CD8-positive, alpha-beta T cell (primary cell): ENCODE measurements at regions of chr4 and their contacts with region 1.

Region 1: DNA sequence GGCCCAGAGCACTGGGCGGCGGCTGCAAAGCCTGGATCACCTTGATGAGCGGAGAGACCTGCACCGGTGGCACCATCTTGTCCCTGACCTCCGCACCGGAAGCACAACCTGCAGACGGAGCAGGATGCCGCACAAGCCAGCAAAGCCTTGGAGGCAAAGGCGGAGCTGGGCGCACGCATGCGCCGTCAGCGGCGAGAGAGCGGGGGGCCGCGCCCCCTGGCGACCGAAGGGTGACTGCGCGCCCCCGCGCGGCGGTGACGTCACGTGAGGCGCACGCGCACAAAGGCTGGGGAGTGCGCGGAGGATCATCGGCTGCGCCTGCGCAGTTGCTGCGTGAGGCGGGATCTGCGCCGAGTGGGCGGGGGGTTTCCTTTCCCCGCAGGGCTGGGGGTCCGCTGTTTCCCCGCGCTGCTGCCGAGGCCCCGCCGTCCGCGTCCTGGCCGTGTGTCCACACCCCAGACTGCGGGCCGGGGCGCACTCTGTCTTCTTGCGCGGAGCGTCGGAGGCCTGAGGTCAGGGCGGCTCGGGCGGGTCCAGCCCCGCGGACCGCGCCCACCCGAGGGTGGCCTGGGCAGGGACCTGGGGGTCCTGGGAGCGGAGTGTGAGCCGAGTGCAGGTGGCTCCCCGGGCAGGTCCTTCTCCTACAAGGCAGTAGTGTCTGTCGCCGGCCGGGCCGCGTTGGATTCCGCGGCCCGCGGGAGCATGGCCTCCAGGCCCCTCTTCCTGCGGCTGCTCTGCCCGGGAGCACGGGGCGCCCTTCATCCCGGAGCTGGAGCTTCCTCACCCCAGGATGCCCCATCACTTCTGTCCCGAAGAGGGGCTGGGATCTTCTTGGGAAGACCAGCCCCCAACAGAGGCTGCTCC is at the starts of genes ATP5ME and MYL5:
- DNase-seq: peak; percentile 95 to 99 (median 98)
- ATAC-seq: peak; percentile 91
- H3K4me3 ChIP-seq: peak within 1 kb of the TSS; percentile 79 to 92
- H3K4me3 Mint-ChIP-seq: peak within 1 kb of the TSS; percentile 91
- H3K27ac ChIP-seq: peak within 1 kb of the TSS; percentile 93 to 94
- H3K27ac Mint-ChIP-seq: peak within 1 kb of the TSS; percentile 88
- H3K4me1 ChIP-seq: peaks cover 21% of the 10 kb centered on the region
- H3K4me1 Mint-ChIP-seq: peaks cover 7% of the 10 kb centered on the region
- H3K27me3 ChIP-seq: no peaks in the 10 kb centered on the region
- H3K27me3 Mint-ChIP-seq: no peaks in the 10 kb centered on the region
- CTCF ChIP-seq: peak; percentile 87
- total RNA-seq, gene ATP5ME: 113 to 114 TPM
- total RNA-seq, gene MYL5: 27.2 to 28.7 TPM

Region 2: GRCh38 chr4:242121-242848 is 432.1 kb before region 1 on chr4:
- CTCF ChIA-PET with region 1: no interaction called
- POLR2A ChIA-PET with region 1: no interaction called
- intact Hi-C with region 1: loop called (anchors 2 to 5 kb)
- DNase-seq: peak; percentile 25 to 88 (median 64)
- ATAC-seq: peak; percentile 97
- H3K4me3 ChIP-seq: peak overlapping the region; percentile 49 to 55
- H3K4me3 Mint-ChIP-seq: peak overlapping the region; percentile 90
- H3K27ac ChIP-seq: peak overlapping the region in 1 of 2 experiments; percentile 64
- H3K27ac Mint-ChIP-seq: peak overlapping the region; percentile 89
- H3K4me1 ChIP-seq: peaks cover 4% of the 10 kb centered on the region
- H3K4me1 Mint-ChIP-seq: peaks cover 11% of the 10 kb centered on the region
- H3K27me3 ChIP-seq: no peaks in the 10 kb centered on the region
- H3K27me3 Mint-ChIP-seq: no peaks in the 10 kb centered on the region
- CTCF ChIP-seq: peak; percentile 78

Region 3: GRCh38 chr4:473570-474457 is 200.6 kb before region 1 on chr4:
- CTCF ChIA-PET with region 1: no interaction called
- POLR2A ChIA-PET with region 1: interaction called, 4 read pairs
- intact Hi-C with region 1: loop called in 1 of 2 experiments (anchors 5 kb)
- DNase-seq: peak; percentile 85 to 99 (median 92)
- ATAC-seq: peak; percentile 96
- H3K4me3 ChIP-seq: peak overlapping the region; percentile 77 to 79
- H3K4me3 Mint-ChIP-seq: peak overlapping the region; percentile 99
- H3K27ac ChIP-seq: peak overlapping the region; percentile 86 to 88
- H3K27ac Mint-ChIP-seq: peak overlapping the region; percentile 100
- H3K4me1 ChIP-seq: peaks cover 10% of the 10 kb centered on the region
- H3K4me1 Mint-ChIP-seq: peaks cover 34% of the 10 kb centered on the region
- H3K27me3 ChIP-seq: no peaks in the 10 kb centered on the region
- H3K27me3 Mint-ChIP-seq: no peaks in the 10 kb centered on the region
- CTCF ChIP-seq: no peak

Region 4: DNA sequence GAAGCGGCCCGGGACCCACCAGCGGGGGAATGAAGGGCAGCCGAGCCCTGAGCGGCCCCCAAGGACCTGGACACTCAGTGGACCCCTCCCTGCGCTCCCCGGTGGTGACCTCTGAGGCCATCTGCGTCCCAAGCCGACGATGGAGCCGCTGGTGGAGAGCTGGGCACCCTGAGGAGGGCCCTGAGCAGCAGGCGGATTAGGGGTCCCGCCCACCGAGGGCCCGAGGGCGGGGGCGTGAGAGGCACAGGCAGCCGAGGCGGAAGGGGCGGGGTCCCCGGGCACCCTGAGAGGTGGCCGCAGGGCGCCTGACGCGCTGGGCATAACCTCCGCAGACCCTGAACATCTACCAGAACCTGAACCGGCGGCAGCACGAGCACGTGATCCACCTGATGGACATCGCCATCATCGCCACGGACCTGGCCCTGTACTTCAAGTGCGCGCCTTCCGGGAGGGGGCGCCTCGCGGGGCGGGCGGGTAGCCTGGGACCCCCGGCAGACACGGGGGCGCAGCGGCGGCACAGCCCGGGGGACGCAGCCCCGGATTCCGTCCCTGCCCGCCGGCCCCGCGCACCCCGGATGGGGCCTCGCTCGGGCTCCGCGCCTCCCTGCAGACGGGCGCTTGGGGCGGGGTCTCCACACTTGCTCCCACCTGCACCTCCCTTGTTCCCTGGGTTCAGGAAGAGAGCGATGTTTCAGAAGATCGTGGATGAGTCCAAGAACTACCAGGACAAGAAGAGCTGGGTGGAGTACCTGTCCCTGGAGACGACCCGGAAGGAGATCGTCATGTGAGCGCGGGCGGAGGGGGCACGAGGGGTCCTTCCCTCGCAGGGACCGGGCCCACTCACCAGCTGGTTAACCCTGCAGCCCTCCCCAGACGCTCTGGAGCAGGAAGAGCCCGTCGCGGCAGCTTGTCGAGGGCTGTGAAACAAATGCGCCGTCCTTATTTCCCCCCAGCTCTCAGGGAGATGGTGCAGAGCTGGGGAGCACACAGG is 10.7 kb before region 1 on chr4:
- CTCF ChIA-PET with region 1: interaction called, 3 read pairs
- POLR2A ChIA-PET with region 1: interaction called, 30 read pairs
- intact Hi-C with region 1: loop called (anchors 1 kb)
- DNase-seq: peak; percentile 64 to 87 (median 81)
- ATAC-seq: peak; percentile 94
- H3K4me3 ChIP-seq: peak overlapping the region; percentile 72 to 93
- H3K4me3 Mint-ChIP-seq: peak overlapping the region; percentile 83
- H3K27ac ChIP-seq: peak overlapping the region; percentile 74 to 81
- H3K27ac Mint-ChIP-seq: peak overlapping the region; percentile 92
- H3K4me1 ChIP-seq: peaks cover 19% of the 10 kb centered on the region
- H3K4me1 Mint-ChIP-seq: peaks cover 17% of the 10 kb centered on the region
- H3K27me3 ChIP-seq: no peaks in the 10 kb centered on the region
- H3K27me3 Mint-ChIP-seq: no peaks in the 10 kb centered on the region
- CTCF ChIP-seq: no peak

Region 5: DNA sequence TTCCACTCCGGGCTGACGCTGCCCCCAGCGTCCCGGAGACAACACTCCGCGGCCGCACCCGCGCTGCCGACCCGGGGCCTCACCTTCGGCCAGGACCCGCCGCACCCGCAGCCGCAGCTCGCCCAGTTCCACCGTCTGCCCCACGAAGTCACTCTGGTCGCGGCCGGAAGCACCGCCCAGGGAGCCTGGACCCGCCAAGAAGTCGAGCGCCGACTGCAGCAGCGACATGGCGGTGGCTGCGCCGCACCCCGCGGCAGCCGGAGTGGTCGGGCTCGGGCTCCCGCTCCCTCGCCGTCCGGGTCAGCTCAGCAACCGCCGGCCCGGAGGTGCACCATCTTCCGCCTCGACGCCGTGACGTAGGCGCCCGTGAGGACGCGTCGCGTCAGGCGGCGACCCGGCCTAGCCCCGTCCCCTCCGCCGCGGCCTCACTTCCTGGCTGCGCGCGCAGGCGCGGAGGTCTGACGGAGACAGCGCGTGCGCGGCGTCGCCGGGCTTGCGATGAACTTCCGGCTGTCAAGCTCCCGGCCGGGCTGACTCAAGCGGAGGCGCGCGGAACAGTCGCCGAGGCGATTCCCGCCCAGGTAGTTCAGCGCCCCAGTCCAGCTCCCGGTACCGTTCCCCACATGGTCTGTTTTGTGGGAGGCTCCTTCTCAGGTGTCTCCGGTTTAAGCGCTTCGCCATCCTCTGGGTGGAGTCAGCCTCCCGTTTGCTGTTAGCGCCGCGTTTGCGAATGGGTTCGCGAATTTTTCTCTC is 257.7 kb after region 1 on chr4 and contains the starts of genes GAK and TMEM175:
- CTCF ChIA-PET with region 1: no interaction called
- POLR2A ChIA-PET with region 1: no interaction called
- intact Hi-C with region 1: loop called in 1 of 2 experiments (anchors 1 kb)
- DNase-seq: peak; percentile 90 to 99 (median 96)
- ATAC-seq: peak; percentile 91
- H3K4me3 ChIP-seq: peak within 1 kb of the TSS; percentile 91 to 96
- H3K4me3 Mint-ChIP-seq: peak within 1 kb of the TSS; percentile 96
- H3K27ac ChIP-seq: peak within 1 kb of the TSS; percentile 91 to 92
- H3K27ac Mint-ChIP-seq: peak within 1 kb of the TSS; percentile 97
- H3K4me1 ChIP-seq: peaks cover 39% of the 10 kb centered on the region
- H3K4me1 Mint-ChIP-seq: peaks cover 51% of the 10 kb centered on the region
- H3K27me3 ChIP-seq: no peaks in the 10 kb centered on the region
- H3K27me3 Mint-ChIP-seq: no peaks in the 10 kb centered on the region
- CTCF ChIP-seq: no peak
- total RNA-seq, gene GAK: 161 to 162 TPM
- total RNA-seq, gene TMEM175: 44.9 to 47.2 TPM

Region 6: GRCh38 chr4:986879-987623 is 312.6 kb after region 1 on chr4 and contains the start of gene IDUA:
- CTCF ChIA-PET with region 1: no interaction called
- POLR2A ChIA-PET with region 1: no interaction called
- intact Hi-C with region 1: loop called in 1 of 2 experiments (anchors 5 kb)
- DNase-seq: peak; percentile 76 to 94 (median 87)
- ATAC-seq: peak; percentile 85
- H3K4me3 ChIP-seq: peak within 1 kb of the TSS; percentile 64 to 89
- H3K4me3 Mint-ChIP-seq: peak within 1 kb of the TSS; percentile 89
- H3K27ac ChIP-seq: peak within 1 kb of the TSS; percentile 62 to 65
- H3K27ac Mint-ChIP-seq: peak within 1 kb of the TSS; percentile 91
- H3K4me1 ChIP-seq: peaks cover 35% of the 10 kb centered on the region
- H3K4me1 Mint-ChIP-seq: peaks cover 31% of the 10 kb centered on the region
- H3K27me3 ChIP-seq: no peaks in the 10 kb centered on the region
- H3K27me3 Mint-ChIP-seq: no peaks in the 10 kb centered on the region
- CTCF ChIP-seq: peak; percentile 61
- total RNA-seq, gene IDUA: 54.3 to 62.0 TPM